ENCODE measurements at regions of chr1 and their contacts with region 1.

Region 1: DNA sequence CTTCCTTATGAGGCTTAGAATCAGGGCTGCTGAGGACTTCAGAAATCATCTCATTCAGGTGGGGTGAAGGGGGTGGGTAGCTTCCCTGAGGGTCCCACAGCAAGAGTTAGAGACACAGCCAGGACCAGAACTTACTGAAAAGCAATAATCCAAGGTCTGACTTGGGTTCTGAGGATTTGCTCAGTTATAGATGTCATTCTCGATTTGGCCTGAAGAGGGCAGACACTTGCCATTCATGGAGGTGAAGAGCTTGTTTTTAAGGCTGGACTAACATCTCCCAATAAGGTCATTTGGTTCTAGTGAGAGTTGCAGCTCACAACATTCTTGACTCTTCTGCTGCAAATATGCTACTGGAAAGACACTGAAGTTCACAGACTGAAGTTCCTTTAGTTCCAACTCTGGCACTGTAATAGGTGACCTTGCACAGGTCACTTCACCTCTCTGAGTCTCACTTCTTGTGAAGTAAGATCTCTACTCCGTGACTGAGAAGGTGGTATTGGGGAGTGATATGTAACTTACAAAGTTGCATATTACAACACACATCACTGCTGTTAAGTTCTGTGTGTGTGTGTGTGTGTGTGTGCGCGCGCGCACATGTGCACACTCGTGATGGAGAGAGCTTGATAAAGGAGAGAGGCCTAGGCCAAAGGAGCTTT is 69.8 kb upstream of the DIRAS3 start:
- DNase-seq: peak; percentile 59 to 79 (median 69)
- H3K4me3 ChIP-seq: no peak overlapping the region
- H3K27ac ChIP-seq: no peak overlapping the region
- H3K4me1 ChIP-seq: peaks cover 0 to 4% (median 0%) of the 10 kb centered on the region in 4 experiments
- H3K27me3 ChIP-seq: peaks cover 0 to 2% (median 0%) of the 10 kb centered on the region in 5 experiments

Region 2: GRCh38 chr1:67850151-67850551 is 270.1 kb before region 1 on chr1:
- CTCF ChIA-PET with region 1: interaction called, 11 read pairs
- POLR2A ChIA-PET with region 1: no interaction called
- DNase-seq: peak in 2 of 3 donors; percentile 39 to 52
- H3K4me3 ChIP-seq: no peak overlapping the region
- H3K27ac ChIP-seq: no peak overlapping the region
- H3K4me1 ChIP-seq: no peaks in the 10 kb centered on the region
- H3K27me3 ChIP-seq: no peaks in the 10 kb centered on the region

Region 3: DNA sequence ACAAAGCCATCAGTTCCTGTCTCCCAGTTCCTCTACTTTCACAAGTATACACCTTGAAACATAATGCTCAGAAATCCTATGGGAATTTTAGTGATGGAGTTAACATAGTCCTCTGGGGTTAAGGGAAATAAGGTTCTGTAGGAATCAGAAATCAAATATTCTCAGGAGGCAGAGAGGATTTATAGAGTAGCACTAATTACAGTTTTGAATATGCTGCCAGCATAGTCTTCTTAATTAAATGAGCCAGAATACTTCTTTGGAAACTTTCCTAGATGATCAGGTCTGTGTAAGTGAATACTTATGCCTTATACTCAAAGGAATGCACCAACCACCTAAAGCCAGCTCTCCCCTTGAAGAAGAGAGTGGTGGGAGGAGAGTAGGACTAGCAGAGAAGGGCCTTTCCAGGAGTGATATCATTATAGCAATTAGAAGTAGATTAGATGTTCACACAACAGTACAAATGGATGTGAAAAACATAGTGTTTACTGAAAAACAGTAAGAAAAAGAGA is 38.4 kb before region 1 on chr1:
- CTCF ChIA-PET with region 1: no interaction called
- POLR2A ChIA-PET with region 1: no interaction called
- DNase-seq: no peak
- H3K4me3 ChIP-seq: no peak overlapping the region
- H3K27ac ChIP-seq: no peak overlapping the region
- H3K4me1 ChIP-seq: no peaks in the 10 kb centered on the region
- H3K27me3 ChIP-seq: no peaks in the 10 kb centered on the region

Region 4: GRCh38 chr1:68197891-68198290 is 77.6 kb after region 1 on chr1:
- CTCF ChIA-PET with region 1: no interaction called
- POLR2A ChIA-PET with region 1: no interaction called
- DNase-seq: no peak
- H3K4me3 ChIP-seq: no peak overlapping the region
- H3K27ac ChIP-seq: no peak overlapping the region
- H3K4me1 ChIP-seq: no peaks in the 10 kb centered on the region
- H3K27me3 ChIP-seq: no peaks in the 10 kb centered on the region

Region 5: DNA sequence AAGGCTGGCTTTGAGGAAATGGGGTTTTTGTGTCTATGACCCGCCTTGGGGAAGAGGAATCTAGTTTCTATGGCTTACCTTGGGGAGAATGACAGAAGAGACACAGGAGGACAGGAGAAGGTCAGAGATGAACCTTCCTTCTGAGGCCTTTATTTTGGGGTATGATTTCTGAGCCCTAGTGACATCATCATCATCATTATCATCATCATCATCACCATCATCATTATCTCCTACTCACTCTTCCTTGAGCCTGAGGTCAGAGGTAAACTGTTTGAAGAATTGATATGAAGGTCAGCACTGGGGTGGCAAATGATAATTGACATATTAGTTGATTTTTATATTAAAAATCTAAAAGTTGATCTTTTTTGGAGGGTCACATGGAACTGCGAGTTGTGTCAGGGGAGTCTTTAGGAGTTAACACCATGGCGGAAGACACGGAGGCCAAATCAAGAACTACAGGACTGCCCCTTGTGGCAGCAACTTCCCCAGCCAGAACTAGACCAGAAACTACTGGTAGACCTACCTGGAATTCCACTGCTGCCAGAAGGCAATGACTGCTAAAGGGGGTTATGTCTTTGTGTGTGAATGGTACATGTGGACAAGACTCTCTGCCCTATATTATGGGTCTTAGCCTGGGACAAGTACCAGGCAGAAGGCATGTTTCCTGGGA is 161.8 kb after region 1 on chr1:
- CTCF ChIA-PET with region 1: no interaction called
- POLR2A ChIA-PET with region 1: no interaction called
- DNase-seq: no peak
- H3K4me3 ChIP-seq: no peak overlapping the region
- H3K27ac ChIP-seq: no peak overlapping the region
- H3K4me1 ChIP-seq: no peaks in the 10 kb centered on the region
- H3K27me3 ChIP-seq: no peaks in the 10 kb centered on the region

Region 6: DNA sequence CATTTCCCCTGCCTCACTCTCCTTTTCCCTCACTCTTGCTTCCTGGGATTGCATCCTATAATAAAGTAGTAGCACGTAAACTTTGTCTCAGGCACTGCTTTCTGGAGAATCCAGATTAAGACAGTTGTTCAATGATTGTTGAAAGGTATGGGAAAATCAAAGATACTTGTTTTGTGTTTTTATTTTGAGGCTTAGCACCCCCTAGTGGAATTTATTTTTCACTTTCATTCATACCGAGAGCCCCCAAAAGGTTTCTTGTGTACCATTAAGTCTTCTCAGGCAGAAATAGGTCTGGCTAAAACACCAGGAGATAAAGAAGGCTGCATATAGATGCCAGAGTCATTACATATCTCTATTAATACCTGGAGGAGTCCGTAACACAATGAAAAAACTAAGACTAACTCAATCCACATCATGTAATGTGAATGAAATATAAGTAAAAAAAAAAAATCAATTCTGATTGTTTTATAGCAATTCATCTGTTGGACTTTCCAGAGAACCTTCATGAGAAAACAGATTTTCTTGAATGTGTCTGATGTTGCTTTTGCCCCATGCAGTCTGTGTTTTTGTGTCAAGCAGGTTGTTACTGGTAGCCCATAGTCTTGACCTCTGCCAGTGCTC is 226.0 kb after region 1 on chr1:
- CTCF ChIA-PET with region 1: interaction called, 53 read pairs
- POLR2A ChIA-PET with region 1: no interaction called
- DNase-seq: peak; percentile 31 to 54 (median 47)
- H3K4me3 ChIP-seq: no peak overlapping the region
- H3K27ac ChIP-seq: no peak overlapping the region
- H3K4me1 ChIP-seq: peaks cover 0 to 7% (median 2%) of the 10 kb centered on the region in 4 experiments
- H3K27me3 ChIP-seq: no peaks in the 10 kb centered on the region

Region 7: DNA sequence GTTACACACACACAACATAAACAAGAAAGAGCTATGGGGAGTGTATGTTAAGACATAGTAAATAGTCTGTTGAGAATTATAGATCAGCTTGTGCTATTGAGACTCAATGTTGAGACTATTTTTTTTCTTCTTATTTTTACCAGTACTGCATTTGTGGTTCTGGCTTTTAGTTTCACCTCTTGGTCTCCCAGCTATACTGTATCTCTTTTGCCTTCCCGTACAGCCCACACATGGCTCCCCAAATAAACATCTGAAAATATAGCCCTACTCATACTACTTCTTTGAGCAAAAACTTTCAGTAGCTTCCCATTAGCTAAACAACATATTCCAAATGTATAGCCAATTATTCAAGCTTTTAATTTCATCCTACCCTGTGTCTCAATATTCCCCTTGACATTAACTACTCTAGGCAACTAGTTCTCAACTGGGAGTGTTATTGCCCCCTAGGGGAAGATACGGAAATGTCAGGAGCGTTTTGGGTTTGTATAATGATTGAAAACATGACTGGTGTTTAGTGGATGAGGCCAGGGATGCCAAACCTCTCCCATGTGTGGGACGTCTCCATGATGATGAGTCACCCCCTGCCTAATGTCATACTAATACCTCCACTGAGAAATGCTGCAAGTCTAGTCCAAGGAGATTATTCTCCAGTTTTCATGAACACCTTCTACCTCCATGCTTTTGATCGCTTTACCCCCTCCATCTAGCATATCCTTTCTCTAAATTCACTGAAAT is 322.7 kb after region 1 on chr1:
- CTCF ChIA-PET with region 1: interaction called, 19 read pairs
- POLR2A ChIA-PET with region 1: no interaction called
- DNase-seq: peak; percentile 29 to 53 (median 50)
- H3K4me3 ChIP-seq: no peak overlapping the region
- H3K27ac ChIP-seq: no peak overlapping the region
- H3K4me1 ChIP-seq: no peaks in the 10 kb centered on the region
- H3K27me3 ChIP-seq: peaks cover 0 to 2% (median 0%) of the 10 kb centered on the region in 5 experiments

Region 8: GRCh38 chr1:69737527-69738185 is 1617.4 kb after region 1 on chr1:
- CTCF ChIA-PET with region 1: interaction called, 24 read pairs
- POLR2A ChIA-PET with region 1: no interaction called
- DNase-seq: peak; percentile 66 to 82 (median 77)
- H3K4me3 ChIP-seq: no peak overlapping the region
- H3K27ac ChIP-seq: no peak overlapping the region
- H3K4me1 ChIP-seq: no peaks in the 10 kb centered on the region
- H3K27me3 ChIP-seq: no peaks in the 10 kb centered on the region